Endothelial cell of umbilical vein (primary cell): ENCODE measurements at regions of chr17 and their contacts with region 1.

Region 1: GRCh38 chr17:40168262-40168832 is 8.9 kb upstream of the RAPGEFL1 start:
- DNase-seq: peak; percentile 65
- H3K4me3 ChIP-seq: no peak overlapping the region
- H3K27ac ChIP-seq: peak overlapping the region; percentile 4
- H3K4me1 ChIP-seq: no peaks in the 10 kb centered on the region
- H3K27me3 ChIP-seq: no peaks in the 10 kb centered on the region
- CTCF ChIP-seq: peak; percentile 53 to 65
- POLR2A ChIP-seq: no peak

Region 2: DNA sequence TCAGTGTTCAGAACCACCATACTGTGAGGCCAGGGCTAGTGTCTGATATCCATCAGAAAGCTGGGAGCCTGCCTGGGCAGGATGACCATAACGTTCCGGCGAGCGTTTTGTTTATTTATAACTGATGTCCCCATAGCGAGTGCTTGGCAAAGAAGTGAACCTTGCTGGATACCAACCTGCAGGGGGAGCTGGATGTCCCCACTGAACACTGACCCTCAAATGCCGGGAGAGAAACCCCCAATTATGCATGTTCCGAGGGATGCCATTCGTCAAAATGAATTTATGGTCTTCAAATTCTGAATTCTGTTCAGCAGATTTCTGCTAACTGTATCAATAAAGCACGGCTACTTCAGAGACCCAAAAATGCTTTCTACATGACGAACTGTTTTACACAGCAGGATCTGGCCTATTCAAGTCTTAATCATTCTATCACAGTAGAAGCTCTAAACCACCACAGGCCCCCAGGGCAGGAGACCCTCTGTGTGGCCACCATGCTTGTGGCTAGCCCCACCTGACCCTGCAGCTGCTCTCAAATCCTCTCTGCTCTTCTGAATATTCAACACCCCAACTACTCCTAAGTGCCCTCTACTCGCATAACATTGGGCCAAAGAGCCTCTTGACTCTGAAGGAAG is 129.3 kb before region 1 on chr17:
- CTCF ChIA-PET with region 1: interaction called, 21 read pairs
- POLR2A ChIA-PET with region 1: no interaction called
- dilution Hi-C with region 1: no loop called
- intact Hi-C with region 1: loop called (anchors 1 kb)
- DNase-seq: peak; percentile 84
- H3K4me3 ChIP-seq: no peak overlapping the region
- H3K27ac ChIP-seq: peak overlapping the region; percentile 27
- H3K4me1 ChIP-seq: peaks cover 5% of the 10 kb centered on the region
- H3K27me3 ChIP-seq: no peaks in the 10 kb centered on the region
- CTCF ChIP-seq: peak; percentile 74 to 85
- POLR2A ChIP-seq: peak; percentile 28

Region 3: DNA sequence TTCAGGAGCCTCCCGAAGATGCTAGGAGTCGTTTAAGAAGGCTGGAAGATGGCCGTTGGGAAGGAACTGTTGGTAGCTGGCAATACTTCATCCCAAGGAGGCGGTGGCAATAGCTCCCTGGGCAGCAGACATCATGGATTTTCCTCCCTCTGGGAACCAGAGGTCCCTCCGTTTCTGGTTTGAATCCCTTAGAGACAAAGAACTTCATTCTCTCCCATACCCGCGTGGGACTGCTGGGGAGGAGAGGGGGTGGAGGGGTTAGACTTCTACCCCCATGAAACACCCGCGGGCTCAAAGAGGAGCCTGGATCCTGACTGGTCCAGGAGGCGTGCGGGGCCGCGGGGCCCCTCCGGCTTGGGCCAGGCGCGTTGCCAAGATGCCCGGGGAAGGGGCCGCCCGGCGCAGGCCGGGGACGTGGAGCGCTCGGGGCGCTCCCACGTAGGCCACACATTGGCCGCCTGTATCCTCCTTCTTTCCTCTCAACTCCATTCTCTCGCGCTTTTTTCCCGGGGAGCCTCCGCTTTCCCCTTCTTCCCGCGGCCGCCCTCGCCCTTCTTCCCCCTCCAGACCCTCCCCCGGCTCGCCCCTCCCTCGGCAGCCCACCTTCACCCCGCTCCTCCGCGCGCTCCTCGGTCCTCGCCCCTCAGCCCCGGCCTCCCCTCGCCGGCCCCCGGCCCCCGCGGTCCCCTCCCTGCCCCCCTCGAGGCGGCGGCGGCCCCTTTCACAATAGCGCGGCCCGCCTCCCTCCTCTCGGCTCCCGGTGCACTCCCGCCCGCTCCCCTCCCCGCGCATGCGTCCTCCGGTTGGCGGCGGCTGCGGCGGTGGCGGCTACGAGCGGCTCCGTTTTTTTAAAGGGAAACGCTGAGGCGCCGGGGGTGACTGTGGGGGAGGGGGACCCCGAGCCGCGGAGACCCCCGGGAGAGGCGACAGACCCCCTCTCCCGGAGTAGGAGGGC is 46.9 kb before region 1 on chr17 and contains the start of gene MSL1:
- CTCF ChIA-PET with region 1: interaction called, 14 read pairs
- POLR2A ChIA-PET with region 1: no interaction called
- dilution Hi-C with region 1: no loop called
- intact Hi-C with region 1: no loop called
- DNase-seq: peak; percentile 77
- H3K4me3 ChIP-seq: peak within 1 kb of the TSS; percentile 95 to 100 (median 98)
- H3K27ac ChIP-seq: peak within 1 kb of the TSS; percentile 71
- H3K4me1 ChIP-seq: peaks cover 22% of the 10 kb centered on the region
- H3K27me3 ChIP-seq: no peaks in the 10 kb centered on the region
- CTCF ChIP-seq: no peak
- POLR2A ChIP-seq: peak; percentile 84
- total RNA-seq, gene MSL1: 90.8 and 95.0 TPM in 2 replicates

Region 4: DNA sequence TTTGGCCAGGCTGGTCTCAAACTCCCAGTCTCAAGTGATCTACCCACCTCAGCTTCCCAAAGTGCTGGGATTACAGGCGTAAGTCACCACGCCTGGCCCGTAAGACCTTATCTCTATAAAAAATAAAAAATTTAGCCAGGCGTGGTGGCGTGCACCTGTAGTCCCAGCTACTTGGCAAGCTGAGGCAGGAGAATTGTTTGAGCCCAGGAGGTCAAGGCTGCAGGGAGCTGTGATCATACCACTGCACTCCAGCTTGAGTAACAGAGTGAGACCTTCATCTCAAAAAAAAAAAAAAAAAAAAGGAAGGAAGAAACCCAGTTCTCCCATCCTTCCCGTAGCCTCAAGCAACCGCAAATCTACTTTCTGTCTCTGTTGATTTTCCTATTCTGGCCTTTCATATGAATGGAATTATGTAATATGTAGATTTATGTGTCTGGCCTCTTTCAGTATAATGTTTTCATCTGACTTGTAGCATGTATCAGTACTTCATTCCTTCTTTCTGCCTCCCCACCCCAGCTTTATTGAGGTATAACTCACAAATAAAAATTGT is 16.9 kb before region 1 on chr17:
- CTCF ChIA-PET with region 1: interaction called, 21 read pairs
- POLR2A ChIA-PET with region 1: no interaction called
- dilution Hi-C with region 1: no loop called
- intact Hi-C with region 1: no loop called
- DNase-seq: no peak
- H3K4me3 ChIP-seq: no peak overlapping the region
- H3K27ac ChIP-seq: no peak overlapping the region
- H3K4me1 ChIP-seq: no peaks in the 10 kb centered on the region
- H3K27me3 ChIP-seq: no peaks in the 10 kb centered on the region
- CTCF ChIP-seq: no peak
- POLR2A ChIP-seq: no peak

Region 5: GRCh38 chr17:40191237-40192208 is 23.2 kb after region 1 on chr17:
- CTCF ChIA-PET with region 1: interaction called, 25 read pairs
- POLR2A ChIA-PET with region 1: no interaction called
- dilution Hi-C with region 1: no loop called
- intact Hi-C with region 1: no loop called
- DNase-seq: peak; percentile 88
- H3K4me3 ChIP-seq: peak overlapping the region; percentile 20 to 55 (median 40)
- H3K27ac ChIP-seq: no peak overlapping the region
- H3K4me1 ChIP-seq: peaks cover 4% of the 10 kb centered on the region
- H3K27me3 ChIP-seq: no peaks in the 10 kb centered on the region
- CTCF ChIP-seq: peak; percentile 73 to 90
- POLR2A ChIP-seq: no peak

Region 6: DNA sequence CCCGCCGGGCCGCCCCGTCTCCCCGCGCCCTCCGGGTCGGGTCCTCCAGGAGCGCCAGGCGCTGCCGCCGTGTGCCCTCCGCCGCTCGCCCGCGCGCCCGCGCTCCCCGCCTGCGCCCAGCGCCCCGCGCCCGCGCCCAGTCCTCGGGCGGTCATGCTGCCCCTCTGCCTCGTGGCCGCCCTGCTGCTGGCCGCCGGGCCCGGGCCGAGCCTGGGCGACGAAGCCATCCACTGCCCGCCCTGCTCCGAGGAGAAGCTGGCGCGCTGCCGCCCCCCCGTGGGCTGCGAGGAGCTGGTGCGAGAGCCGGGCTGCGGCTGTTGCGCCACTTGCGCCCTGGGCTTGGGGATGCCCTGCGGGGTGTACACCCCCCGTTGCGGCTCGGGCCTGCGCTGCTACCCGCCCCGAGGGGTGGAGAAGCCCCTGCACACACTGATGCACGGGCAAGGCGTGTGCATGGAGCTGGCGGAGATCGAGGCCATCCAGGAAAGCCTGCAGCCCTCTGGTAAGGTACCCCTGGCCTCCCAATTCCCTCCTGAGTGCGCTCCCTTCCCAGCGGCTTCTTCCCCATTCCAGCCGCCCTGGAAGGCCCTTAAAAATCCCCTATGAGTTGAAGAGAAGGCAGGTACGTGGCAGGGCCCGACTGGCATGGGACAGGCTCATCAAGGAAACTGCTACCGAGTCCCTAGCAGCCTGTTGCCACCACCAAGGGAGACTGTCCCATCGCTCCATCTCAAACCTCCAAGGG is 275.4 kb after region 1 on chr17:
- CTCF ChIA-PET with region 1: no interaction called
- POLR2A ChIA-PET with region 1: no interaction called
- dilution Hi-C with region 1: no loop called
- intact Hi-C with region 1: no loop called
- DNase-seq: peak; percentile 69
- H3K4me3 ChIP-seq: peak overlapping the region; percentile 51 to 92 (median 58)
- H3K27ac ChIP-seq: peak overlapping the region; percentile 43
- H3K4me1 ChIP-seq: peaks cover 40% of the 10 kb centered on the region
- H3K27me3 ChIP-seq: no peaks in the 10 kb centered on the region
- CTCF ChIP-seq: peak; percentile 45 to 76
- POLR2A ChIP-seq: no peak